Activated T-helper 1 cell treated with anti-CD3 and anti-CD28 coated beads, Interleukin-12 subunit alpha, Interleukin-12 subunit beta, Interleukin-2, Interleukin-4 antibody, amounts not matched to agents 30 ng/mL and 10 ng/mL and 1 ng/mL, durations not matched to agents 14 hours and 24 hours and 36 hours (primary cell): ENCODE measurements at regions of chr6 and their contacts with region 1.

Region 1: GRCh38 chr6:73129653-73130443 is 95.4 kb downstream of the KHDC1L start:
- DNase-seq: peak; percentile 71
- H3K4me3 Mint-ChIP-seq: no peak overlapping the region
- H3K27ac Mint-ChIP-seq: no peak overlapping the region
- H3K4me1 Mint-ChIP-seq: peaks cover 5% of the 10 kb centered on the region
- H3K27me3 Mint-ChIP-seq: peaks cover 13% of the 10 kb centered on the region

Region 2: GRCh38 chr6:72182337-72183246 is 947.3 kb before region 1 on chr6:
- intact Hi-C with region 1: no loop called
- DNase-seq: no peak
- H3K4me3 Mint-ChIP-seq: peak overlapping the region; percentile 51
- H3K27ac Mint-ChIP-seq: no peak overlapping the region
- H3K4me1 Mint-ChIP-seq: peaks cover 4% of the 10 kb centered on the region
- H3K27me3 Mint-ChIP-seq: peaks cover 33% of the 10 kb centered on the region

Region 3: GRCh38 chr6:72522719-72523141 is 607.1 kb before region 1 on chr6:
- intact Hi-C with region 1: loop called (anchors 5 kb)
- DNase-seq: no peak
- H3K4me3 Mint-ChIP-seq: no peak overlapping the region
- H3K27ac Mint-ChIP-seq: no peak overlapping the region
- H3K4me1 Mint-ChIP-seq: no peaks in the 10 kb centered on the region
- H3K27me3 Mint-ChIP-seq: no peaks in the 10 kb centered on the region

Region 4: DNA sequence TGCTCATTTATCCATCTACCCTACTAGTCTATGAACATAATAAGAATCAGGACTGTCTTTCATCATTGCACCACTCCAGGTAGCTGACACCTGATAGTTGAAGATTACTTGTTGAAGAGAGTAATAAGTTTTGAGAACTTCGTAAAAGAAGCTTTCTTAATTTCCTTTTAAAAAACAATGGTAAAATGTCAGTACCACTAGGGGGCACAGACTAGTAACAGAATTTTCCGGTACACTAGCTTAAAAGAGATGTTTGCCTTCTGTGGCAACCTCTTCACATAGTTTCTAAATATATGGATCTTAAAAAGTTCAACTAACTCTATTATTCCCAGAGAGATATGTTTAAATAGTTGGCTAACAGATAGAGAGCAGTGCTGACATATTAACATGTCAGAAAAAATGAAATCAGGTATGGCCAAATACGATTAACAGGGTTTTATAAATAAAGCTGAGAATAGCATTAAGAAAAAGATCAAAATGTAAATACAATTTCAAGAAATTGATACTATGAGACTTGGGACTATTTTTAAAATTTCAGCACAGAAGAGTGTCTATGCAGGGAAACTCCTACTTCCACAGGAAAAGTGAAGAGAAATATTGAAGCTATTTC is 513.3 kb before region 1 on chr6:
- intact Hi-C with region 1: loop called (anchors 1 kb)
- DNase-seq: no peak
- H3K4me3 Mint-ChIP-seq: no peak overlapping the region
- H3K27ac Mint-ChIP-seq: no peak overlapping the region
- H3K4me1 Mint-ChIP-seq: peaks cover 33% of the 10 kb centered on the region
- H3K27me3 Mint-ChIP-seq: peaks cover 5% of the 10 kb centered on the region

Region 5: DNA sequence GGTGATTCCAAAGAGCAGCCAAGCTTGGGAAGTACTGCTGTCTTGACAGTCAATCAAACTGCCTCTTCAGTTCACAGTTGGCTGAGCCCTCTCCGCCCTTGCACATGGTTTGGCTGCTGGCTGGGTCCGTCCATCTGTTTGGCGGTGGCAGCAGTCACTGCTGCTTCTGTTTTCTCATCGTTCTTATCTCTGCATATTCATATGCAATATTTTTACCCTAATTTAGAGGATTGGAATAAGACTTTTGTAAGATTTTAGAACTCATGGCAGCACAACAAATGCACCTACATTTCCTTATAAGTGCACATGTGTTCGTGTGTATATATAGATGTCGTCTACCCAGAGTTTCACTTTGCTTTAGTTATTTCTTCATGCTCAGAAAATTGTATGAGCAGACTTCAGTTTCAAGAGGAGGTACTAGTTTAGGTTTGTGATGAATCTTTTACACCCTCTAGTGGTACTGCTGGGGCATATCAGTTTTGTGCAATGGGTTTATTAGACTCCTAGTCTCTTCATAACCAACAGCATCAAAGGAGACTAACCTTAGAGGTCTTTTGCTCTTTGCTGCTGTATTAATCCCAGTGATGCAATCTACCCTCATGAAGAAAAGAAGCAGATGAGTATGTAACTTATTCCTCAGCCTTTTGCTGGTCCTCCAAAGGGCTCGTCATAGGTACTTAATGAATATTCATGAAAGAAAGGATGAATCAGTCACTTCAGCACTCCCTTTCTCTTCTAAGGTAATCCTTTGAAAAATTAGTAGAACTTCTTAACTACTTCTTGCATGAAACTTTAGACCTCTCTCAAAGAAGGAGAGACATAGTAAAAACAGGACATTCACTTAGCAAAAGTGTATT is 51.1 kb after region 1 on chr6:
- intact Hi-C with region 1: loop called (anchors 2 kb)
- DNase-seq: no peak
- H3K4me3 Mint-ChIP-seq: no peak overlapping the region
- H3K27ac Mint-ChIP-seq: no peak overlapping the region
- H3K4me1 Mint-ChIP-seq: peaks cover 4% of the 10 kb centered on the region
- H3K27me3 Mint-ChIP-seq: no peaks in the 10 kb centered on the region

Region 6: GRCh38 chr6:73329201-73329600 is 199.4 kb after region 1 on chr6:
- intact Hi-C with region 1: loop called (anchors 1 kb)
- DNase-seq: no peak
- H3K4me3 Mint-ChIP-seq: no peak overlapping the region
- H3K27ac Mint-ChIP-seq: no peak overlapping the region
- H3K4me1 Mint-ChIP-seq: peaks cover 7% of the 10 kb centered on the region
- H3K27me3 Mint-ChIP-seq: peaks cover 24% of the 10 kb centered on the region